Psoas muscle (tissue), 8 donors: ENCODE measurements at regions of chr17 and their contacts with region 1.

Region 1: DNA sequence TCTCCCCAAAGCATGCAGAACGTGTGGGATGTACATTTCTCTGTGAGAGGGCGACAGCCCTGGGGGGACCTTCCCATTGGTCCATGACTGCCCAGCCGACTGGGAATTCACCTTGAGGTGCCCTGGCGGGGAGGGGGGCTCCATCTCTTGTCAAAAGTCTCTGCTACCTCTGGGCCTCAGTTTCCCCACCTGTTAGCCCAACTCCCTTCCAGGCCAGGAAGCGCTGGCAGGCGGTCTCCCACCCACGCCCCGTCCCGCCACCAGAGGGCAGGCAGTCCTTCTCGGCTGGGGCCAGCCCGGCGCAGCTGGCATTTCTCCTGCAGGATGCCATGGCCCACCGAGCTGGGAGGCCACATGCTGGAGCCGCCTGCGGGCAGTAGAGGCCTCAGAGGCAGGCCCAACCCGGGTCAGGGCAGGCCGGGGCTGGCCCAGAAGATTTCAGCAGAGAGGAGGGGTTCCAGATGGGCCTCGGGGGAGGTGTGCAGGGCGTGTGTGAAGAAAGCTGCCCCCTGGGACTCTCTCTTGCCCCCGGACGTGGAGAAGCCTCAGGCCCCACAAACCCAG is 16.6 kb downstream of the CD7 start:
- DNase-seq: peak; percentile 76 to 87
- ATAC-seq: peak in 2 of 4 donors; percentile 33 to 36
- H3K4me3 ChIP-seq: no peak overlapping the region
- H3K27ac ChIP-seq: no peak overlapping the region
- H3K4me1 ChIP-seq: peaks cover 23% of the 10 kb centered on the region
- H3K27me3 ChIP-seq: no peaks in the 10 kb centered on the region
- CTCF ChIP-seq: peak; percentile 74

Region 2: GRCh38 chr17:81884520-81884919 is 416.3 kb before region 1 on chr17:
- intact Hi-C with region 1: no loop called
- DNase-seq: no peak
- ATAC-seq: peak in 2 of 4 donors; percentile 5 to 15
- H3K4me3 ChIP-seq: no peak overlapping the region
- H3K27ac ChIP-seq: peak overlapping the region; percentile 96
- H3K4me1 ChIP-seq: peaks cover 39% of the 10 kb centered on the region
- H3K27me3 ChIP-seq: no peaks in the 10 kb centered on the region
- CTCF ChIP-seq: no peak

Region 3: DNA sequence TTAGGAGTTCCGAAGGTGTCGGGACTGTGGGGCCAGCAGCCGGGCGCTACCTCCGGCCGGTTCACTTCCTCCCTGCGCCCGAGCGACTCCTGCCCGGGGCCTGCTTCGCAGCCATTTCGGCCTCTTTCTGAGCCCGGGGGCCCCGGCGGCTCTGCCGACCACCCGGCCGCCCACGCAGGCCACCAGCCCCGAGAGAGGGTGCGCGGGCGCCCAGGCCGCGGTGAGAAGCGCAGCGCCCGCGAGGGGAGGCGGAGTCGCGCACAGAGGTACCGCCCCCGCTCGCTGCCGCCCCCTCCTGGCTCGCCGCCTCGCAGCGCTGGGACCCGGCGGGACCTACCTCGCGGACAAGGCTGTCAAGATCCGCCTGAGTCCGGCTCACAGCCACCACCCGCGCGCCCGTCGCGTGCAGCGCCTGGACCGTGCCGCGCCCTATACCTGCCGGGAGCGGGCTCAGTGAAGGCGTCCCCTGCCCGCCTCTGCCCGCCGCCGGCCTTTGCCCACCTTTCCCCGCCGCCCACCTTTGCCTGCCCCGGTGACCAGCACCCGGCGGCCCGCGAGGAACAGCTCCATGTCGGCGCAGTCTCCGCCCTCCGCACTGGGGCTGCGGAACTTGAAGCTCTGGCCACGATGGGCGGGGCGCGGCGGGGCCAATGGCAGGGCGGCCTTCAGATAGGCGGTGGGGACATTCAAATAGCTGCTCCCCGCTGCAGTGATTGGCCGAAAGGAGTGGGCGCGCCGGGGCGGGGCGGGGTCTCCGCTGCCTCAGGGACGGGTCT is 263.5 kb before region 1 on chr17 and contains the start of gene DCXR:
- intact Hi-C with region 1: loop called in 1 of 2 experiments (anchors 10 kb)
- DNase-seq: peak; percentile 99
- ATAC-seq: peak; percentile 94 to 97 (median 96)
- H3K4me3 ChIP-seq: peak within 1 kb of the TSS; percentile 70
- H3K27ac ChIP-seq: peak within 1 kb of the TSS; percentile 93
- H3K4me1 ChIP-seq: peaks cover 12% of the 10 kb centered on the region
- H3K27me3 ChIP-seq: peaks cover 0 to 6% (median 0%) of the 10 kb centered on the region in 3 donors
- CTCF ChIP-seq: peak; percentile 67
- total RNA-seq, gene DCXR: 111 to 216 (median 155) TPM

Region 4: DNA sequence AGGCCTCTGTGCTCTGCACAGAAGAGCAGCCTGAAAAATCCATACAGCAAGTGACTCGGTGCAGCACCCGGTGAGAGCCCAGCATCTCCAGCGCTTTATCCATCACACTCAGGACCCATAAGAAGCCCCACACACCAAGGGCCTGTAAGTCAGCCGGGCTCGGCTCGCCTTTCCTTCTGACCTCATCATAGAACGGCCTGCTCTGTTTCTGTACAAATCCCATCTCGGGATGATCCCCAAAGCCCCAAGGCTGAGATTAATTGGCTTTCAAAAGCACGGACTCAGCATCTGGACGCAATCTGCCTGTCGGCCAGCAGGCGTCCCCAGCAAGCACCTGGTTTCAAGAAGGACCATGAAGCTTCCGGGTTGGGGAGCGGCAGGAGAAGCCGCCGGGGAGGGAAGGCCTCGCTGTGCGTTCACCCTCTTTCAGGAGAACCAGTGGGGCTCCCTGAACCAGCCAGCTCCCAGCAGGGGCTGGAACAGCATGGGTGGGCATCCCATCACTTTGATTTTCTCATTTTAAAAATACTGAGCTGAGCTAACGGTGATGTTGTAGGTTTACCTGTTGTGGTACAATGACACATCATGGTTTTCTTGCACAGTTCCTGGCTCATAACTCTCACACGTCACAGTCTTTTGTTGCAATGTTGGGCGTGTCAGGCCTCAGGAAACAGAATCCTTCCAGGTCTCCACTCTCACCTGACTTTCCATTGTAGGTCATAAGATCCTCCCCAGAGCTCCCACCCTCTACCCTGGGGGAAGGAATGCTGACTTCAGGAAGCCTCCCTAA is 94.9 kb before region 1 on chr17:
- intact Hi-C with region 1: loop called in 1 of 2 experiments (anchors 5 kb)
- DNase-seq: peak; percentile 85 to 91
- ATAC-seq: peak; percentile 77 to 95 (median 86)
- H3K4me3 ChIP-seq: peak overlapping the region; percentile 5
- H3K27ac ChIP-seq: peak overlapping the region; percentile 23
- H3K4me1 ChIP-seq: peaks cover 5% of the 10 kb centered on the region
- H3K27me3 ChIP-seq: no peaks in the 10 kb centered on the region
- CTCF ChIP-seq: peak; percentile 85

Region 5: DNA sequence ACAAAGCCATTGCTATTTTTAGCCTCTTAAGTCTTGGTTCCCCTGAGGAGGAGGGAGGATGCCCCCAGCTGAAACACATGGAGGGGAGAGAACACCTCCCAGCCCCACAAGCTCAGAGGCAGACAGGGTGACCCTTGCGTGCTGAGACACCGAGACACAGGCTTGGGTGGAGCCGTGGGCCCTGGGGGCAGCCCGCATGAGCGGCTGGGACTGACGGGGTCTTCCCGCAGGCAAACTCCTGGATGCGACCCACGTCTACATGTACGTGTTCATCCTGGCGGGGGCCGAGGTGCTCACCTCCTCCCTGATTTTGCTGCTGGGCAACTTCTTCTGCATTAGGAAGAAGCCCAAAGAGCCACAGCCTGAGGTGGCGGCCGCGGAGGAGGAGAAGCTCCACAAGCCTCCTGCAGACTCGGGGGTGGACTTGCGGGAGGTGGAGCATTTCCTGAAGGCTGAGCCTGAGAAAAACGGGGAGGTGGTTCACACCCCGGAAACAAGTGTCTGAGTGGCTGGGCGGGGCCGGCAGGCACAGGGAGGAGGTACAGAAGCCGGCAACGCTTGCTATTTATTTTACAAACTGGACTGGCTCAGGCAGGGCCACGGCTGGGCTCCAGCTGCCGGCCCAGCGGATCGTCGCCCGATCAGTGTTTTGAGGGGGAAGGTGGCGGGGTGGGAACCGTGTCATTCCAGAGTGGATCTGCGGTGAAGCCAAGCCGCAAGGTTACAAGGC is 62.2 kb before region 1 on chr17:
- intact Hi-C with region 1: no loop called
- DNase-seq: peak; percentile 68 to 78
- ATAC-seq: no peak
- H3K4me3 ChIP-seq: peak overlapping the region; percentile 32
- H3K27ac ChIP-seq: peak overlapping the region; percentile 73
- H3K4me1 ChIP-seq: peaks cover 92% of the 10 kb centered on the region
- H3K27me3 ChIP-seq: no peaks in the 10 kb centered on the region
- CTCF ChIP-seq: no peak

Region 6: GRCh38 chr17:82257473-82257872 is 43.3 kb before region 1 on chr17:
- intact Hi-C with region 1: no loop called
- DNase-seq: peak; percentile 68 to 83
- ATAC-seq: peak; percentile 88 to 94 (median 94)
- H3K4me3 ChIP-seq: no peak overlapping the region
- H3K27ac ChIP-seq: no peak overlapping the region
- H3K4me1 ChIP-seq: no peaks in the 10 kb centered on the region
- H3K27me3 ChIP-seq: no peaks in the 10 kb centered on the region
- CTCF ChIP-seq: no peak

Region 7: DNA sequence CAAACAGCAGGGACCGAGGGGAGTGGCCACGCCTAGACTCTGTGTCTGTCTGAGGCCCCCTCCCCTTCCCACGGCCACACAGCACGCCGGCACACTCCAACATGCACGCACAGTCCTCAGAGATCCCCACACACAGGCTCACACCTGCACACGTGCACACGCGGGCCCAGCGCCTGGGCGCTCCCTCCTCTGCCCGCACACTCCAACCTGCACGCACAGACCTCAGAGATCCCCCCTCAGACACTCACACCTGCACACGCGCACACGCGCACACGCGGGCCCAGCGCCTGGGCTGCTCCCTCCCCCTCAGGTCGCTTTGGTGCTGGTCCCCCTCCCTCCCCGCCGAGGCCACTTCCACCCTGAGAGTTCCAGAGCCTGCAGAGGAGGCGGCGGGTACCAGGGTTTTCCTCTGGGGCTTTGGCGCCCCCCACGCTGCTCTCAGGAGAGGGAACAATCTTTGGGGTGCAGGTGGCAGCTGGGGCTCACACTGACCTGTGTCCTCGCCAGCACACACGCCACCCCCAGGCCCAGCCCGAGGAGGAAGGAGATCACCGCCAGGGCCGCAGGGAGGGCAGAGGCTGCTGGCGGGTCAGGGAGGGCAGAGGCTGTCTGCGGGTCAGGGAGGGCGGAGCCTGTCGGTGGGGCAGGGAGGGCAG is 15.0 kb after region 1 on chr17:
- intact Hi-C with region 1: loop called in 1 of 2 experiments (anchors 2 kb)
- DNase-seq: no peak
- ATAC-seq: peak in 2 of 4 donors; percentile 20 to 35
- H3K4me3 ChIP-seq: peak overlapping the region; percentile 4
- H3K27ac ChIP-seq: no peak overlapping the region
- H3K4me1 ChIP-seq: no peaks in the 10 kb centered on the region
- H3K27me3 ChIP-seq: peaks cover 0 to 21% (median 11%) of the 10 kb centered on the region in 3 donors
- CTCF ChIP-seq: no peak

Region 8: GRCh38 chr17:82399041-82399441 is 98.3 kb after region 1 on chr17:
- intact Hi-C with region 1: no loop called
- DNase-seq: peak; percentile 80 to 84
- ATAC-seq: peak; percentile 57 to 81 (median 74)
- H3K4me3 ChIP-seq: no peak overlapping the region
- H3K27ac ChIP-seq: peak overlapping the region; percentile 46
- H3K4me1 ChIP-seq: peaks cover 16% of the 10 kb centered on the region
- H3K27me3 ChIP-seq: no peaks in the 10 kb centered on the region
- CTCF ChIP-seq: no peak